ENCODE measurements at regions of chr17 and their contacts with region 1.

Region 1: GRCh38 chr17:61551255-61551742 is 39.7 kb downstream of the NACA2 start:
- DNase-seq: no peak
- ATAC-seq: no peak
- H3K4me3 ChIP-seq: no peak overlapping the region
- H3K27ac ChIP-seq: no peak overlapping the region
- H3K4me1 ChIP-seq: no peaks in the 10 kb centered on the region
- H3K27me3 ChIP-seq: peaks cover 0 to 30% (median 15%) of the 10 kb centered on the region in 9 donors
- CTCF ChIP-seq: peak; percentile 34 to 73 (median 54)
- POLR2A ChIP-seq: no peak

Region 2: GRCh38 chr17:60971515-60972369 is 579.6 kb before region 1 on chr17:
- intact Hi-C with region 1: loop called in 1 of 10 experiments (anchors 10 kb)
- DNase-seq: peak in 2 of 5 donors; percentile 20 to 29
- ATAC-seq: peak in 2 of 4 donors; percentile 42 to 46
- H3K4me3 ChIP-seq: no peak overlapping the region
- H3K27ac ChIP-seq: no peak overlapping the region
- H3K4me1 ChIP-seq: peaks cover 0 to 3% (median 0%) of the 10 kb centered on the region in 12 donors
- H3K27me3 ChIP-seq: no peaks in the 10 kb centered on the region
- CTCF ChIP-seq: peak; percentile 16 to 68 (median 54)
- POLR2A ChIP-seq: no peak